A673 (cell line): ENCODE measurements at regions of chr4 and their contacts with region 1.

Region 1: GRCh38 chr4:40056716-40057585 is at the start of gene N4BP2:
- DNase-seq: peak; percentile 93
- H3K4me3 ChIP-seq: peak within 1 kb of the TSS; percentile 61
- H3K27ac ChIP-seq: peak within 1 kb of the TSS; percentile 99
- H3K4me1 ChIP-seq: peaks cover 12% of the 10 kb centered on the region
- H3K27me3 ChIP-seq: no peaks in the 10 kb centered on the region
- CTCF ChIP-seq: peak; percentile 56
- total RNA-seq, gene N4BP2: 21.3 and 24.8 TPM in 2 replicates

Region 2: GRCh38 chr4:39469429-39470077 is 587.4 kb before region 1 on chr4:
- CTCF ChIA-PET with region 1: interaction called, 3 read pairs
- POLR2A ChIA-PET with region 1: no interaction called
- intact Hi-C with region 1: loop called (anchors 5 kb)
- DNase-seq: peak; percentile 92
- H3K4me3 ChIP-seq: no peak overlapping the region
- H3K27ac ChIP-seq: peak overlapping the region; percentile 28
- H3K4me1 ChIP-seq: peaks cover 8% of the 10 kb centered on the region
- H3K27me3 ChIP-seq: no peaks in the 10 kb centered on the region
- CTCF ChIP-seq: peak; percentile 93

Region 3: DNA sequence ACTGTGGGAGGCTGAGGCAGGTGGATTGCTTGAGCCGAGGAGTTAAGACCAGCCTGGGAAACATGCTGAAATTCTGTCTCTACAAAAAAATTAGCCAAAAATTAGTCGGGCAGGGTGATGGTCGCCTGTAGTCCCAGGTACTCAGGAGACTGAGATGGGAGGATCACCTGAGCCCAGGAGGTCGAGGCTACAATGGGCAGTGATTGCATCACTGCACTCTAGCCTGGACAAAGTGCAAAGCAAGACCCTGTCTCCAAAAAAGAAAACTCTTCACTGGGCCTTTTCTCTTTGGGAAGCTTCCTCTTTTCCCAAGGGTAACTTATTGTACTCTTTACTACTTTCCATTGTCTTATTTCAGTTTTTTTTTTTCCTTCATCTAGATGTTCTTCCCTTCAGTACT is 270.1 kb before region 1 on chr4:
- CTCF ChIA-PET with region 1: no interaction called
- POLR2A ChIA-PET with region 1: no interaction called
- intact Hi-C with region 1: no loop called
- DNase-seq: no peak
- H3K4me3 ChIP-seq: no peak overlapping the region
- H3K27ac ChIP-seq: no peak overlapping the region
- H3K4me1 ChIP-seq: no peaks in the 10 kb centered on the region
- H3K27me3 ChIP-seq: no peaks in the 10 kb centered on the region
- CTCF ChIP-seq: no peak

Region 4: GRCh38 chr4:40199999-40200874 is 143.3 kb after region 1 on chr4:
- CTCF ChIA-PET with region 1: no interaction called
- POLR2A ChIA-PET with region 1: no interaction called
- intact Hi-C with region 1: loop called (anchors 2 kb)
- DNase-seq: peak; percentile 73
- H3K4me3 ChIP-seq: peak overlapping the region; percentile 78
- H3K27ac ChIP-seq: peak overlapping the region; percentile 97
- H3K4me1 ChIP-seq: peaks cover 50% of the 10 kb centered on the region
- H3K27me3 ChIP-seq: no peaks in the 10 kb centered on the region
- CTCF ChIP-seq: no peak

Region 5: DNA sequence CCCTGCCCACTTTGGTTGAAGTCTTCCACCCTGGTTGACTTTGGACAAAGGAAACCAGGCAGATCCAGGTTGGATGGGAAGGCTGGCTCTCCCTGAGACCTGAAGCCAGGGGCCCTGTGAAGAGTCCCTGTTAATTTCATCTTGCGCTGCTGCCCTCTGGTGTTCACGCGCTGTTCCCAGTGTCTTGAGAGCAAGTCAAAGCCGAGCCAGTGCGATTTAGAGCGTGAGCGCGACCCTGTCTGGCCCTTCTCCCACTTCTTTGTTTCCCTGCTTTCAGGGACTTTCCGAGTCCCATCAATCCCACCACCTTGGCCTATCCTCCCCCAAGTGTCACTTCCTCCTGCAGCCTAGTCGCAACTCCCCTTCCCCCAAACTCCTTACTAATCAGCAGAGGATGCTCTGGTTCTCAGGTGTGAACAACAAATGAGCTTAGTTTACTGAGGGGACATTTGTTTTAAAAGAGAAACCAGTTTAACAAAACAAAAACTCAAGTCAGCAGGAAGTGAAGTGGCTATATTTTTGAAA is 252.4 kb after region 1 on chr4:
- CTCF ChIA-PET with region 1: no interaction called
- POLR2A ChIA-PET with region 1: no interaction called
- intact Hi-C with region 1: loop called (anchors 2 kb)
- DNase-seq: peak; percentile 94
- H3K4me3 ChIP-seq: peak overlapping the region; percentile 18
- H3K27ac ChIP-seq: no peak overlapping the region
- H3K4me1 ChIP-seq: peaks cover 21% of the 10 kb centered on the region
- H3K27me3 ChIP-seq: no peaks in the 10 kb centered on the region
- CTCF ChIP-seq: peak; percentile 91

Region 6: DNA sequence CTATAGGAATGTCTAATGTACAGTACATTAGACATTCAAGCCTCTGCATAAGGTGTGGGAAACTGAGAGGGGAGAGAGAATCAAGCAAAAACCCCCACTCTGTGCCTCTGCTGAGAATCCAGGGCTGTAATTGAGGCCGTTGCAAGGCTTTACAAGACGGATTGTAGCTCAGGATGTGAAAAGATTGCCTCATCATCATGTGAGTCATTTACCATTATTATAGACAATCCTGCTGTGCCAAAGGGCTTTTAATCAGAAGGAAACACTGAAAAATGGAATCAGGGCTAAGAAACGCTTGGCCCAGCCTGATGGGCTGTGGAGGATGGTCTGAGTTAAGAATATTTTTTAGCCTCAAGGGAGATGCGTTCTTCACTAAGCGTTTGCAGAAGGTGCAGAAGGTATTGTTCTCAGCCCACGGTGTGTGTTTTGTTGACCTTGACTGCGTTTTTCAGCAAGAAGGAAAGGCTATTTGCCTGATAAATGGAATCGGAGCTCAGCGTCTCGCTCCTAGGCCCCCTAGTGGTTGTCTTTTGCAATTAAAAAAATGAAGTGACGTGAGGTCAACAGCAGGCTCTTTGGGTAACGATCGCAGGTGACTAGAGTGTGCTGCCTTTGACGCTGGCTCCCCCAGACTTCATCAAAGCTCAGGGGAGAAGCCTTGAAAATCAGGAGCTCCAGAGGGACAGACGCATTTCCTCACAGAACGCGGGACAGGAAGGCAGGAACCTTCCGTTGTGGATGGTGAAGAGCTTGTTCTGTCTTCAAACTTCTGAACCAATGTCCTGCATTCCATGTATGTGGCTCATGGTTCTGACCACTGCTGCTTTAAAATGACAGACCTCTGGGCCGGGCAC is 260.1 kb after region 1 on chr4:
- CTCF ChIA-PET with region 1: interaction called, 13 read pairs
- POLR2A ChIA-PET with region 1: interaction called, 4 read pairs
- intact Hi-C with region 1: loop called (anchors 2 kb)
- DNase-seq: peak; percentile 95
- H3K4me3 ChIP-seq: peak overlapping the region; percentile 37
- H3K27ac ChIP-seq: peak overlapping the region; percentile 94
- H3K4me1 ChIP-seq: peaks cover 26% of the 10 kb centered on the region
- H3K27me3 ChIP-seq: no peaks in the 10 kb centered on the region
- CTCF ChIP-seq: peak; percentile 91

Region 7: DNA sequence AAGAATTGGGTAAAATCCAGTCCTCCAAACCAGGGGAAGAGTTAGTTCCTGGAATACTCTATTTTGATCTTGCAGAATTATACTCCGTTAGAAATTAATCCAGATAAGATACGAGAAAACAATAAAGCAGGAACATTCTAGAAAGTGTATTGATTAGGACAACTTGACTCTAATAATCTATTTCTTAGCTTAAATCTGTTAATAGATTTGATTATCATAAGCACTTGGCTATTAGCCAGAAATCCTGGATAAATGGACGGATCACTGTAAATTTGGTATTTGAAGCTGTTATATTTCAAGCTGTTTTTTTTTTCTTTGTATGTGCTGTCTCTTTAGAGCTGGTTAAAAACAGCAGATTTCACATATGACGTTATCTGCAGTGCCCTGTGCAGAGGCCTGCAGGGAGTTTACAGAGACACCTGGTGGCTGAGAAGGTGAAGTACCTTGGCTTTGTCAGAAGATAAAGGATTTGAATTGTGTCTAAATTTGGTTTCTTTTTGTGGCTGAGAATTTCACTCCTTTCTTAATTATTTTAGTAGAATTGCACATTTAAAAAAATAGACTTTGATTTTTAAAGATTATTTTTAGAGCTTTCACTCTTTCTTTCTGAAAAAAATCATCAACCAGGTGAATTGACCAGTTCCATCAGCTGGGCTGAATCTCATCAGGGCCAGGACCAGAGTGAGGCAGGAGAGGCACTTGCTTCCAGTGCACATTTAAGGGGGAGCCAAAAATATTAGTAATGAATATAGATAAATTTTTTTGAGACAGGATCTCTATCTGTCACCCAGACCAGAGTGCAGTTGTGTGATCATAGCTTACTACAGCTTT is 268.5 kb after region 1 on chr4:
- CTCF ChIA-PET with region 1: no interaction called
- POLR2A ChIA-PET with region 1: no interaction called
- intact Hi-C with region 1: loop called (anchors 2 kb)
- DNase-seq: peak; percentile 87
- H3K4me3 ChIP-seq: no peak overlapping the region
- H3K27ac ChIP-seq: no peak overlapping the region
- H3K4me1 ChIP-seq: peaks cover 20% of the 10 kb centered on the region
- H3K27me3 ChIP-seq: no peaks in the 10 kb centered on the region
- CTCF ChIP-seq: peak; percentile 90

Region 8: DNA sequence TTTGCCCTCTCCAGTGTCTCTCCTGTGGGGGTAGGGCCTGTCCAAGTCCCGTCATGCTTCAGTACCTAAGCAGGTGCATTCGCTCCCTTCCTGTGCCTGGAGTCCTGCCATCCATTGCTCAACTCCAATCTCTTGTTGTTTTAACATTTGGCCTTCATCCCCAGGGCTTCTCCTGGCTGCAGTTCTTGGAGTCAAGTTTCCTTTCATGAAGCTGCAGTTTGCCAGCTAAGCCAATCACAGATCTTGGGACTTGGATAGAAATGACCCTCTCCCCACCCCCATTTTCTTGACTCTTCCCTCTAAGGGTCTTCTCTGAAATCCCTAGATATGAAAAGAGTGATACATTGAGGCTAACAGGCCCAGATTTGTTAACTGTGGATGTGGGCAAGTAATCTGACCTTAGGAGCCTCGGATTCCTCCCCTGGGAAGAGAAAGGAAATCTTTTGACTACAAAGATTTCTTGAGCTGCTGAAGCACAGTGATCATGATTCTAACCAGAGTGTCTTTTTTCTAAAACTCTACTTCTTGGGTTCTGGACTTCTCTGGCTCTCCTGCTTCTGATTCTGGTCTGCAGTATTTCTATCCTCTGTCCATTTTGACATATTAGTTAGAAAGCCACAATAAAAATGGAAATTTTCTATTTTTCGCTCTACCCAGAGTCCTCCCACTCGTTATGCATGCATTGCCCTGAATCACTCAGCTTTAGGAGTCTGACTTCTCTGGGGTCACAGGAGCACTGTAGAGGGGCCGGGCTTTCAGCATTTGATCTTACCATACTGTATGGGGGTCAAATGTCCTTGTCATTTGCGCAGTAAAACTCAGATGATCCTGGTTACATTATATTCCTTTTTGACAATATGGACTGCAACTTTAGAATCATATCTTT is 339.2 kb after region 1 on chr4:
- CTCF ChIA-PET with region 1: no interaction called
- POLR2A ChIA-PET with region 1: no interaction called
- intact Hi-C with region 1: no loop called
- DNase-seq: no peak
- H3K4me3 ChIP-seq: no peak overlapping the region
- H3K27ac ChIP-seq: no peak overlapping the region
- H3K4me1 ChIP-seq: peaks cover 9% of the 10 kb centered on the region
- H3K27me3 ChIP-seq: no peaks in the 10 kb centered on the region
- CTCF ChIP-seq: no peak